ENCODE measurements at regions of chr6 and their contacts with region 1.

Region 1: DNA sequence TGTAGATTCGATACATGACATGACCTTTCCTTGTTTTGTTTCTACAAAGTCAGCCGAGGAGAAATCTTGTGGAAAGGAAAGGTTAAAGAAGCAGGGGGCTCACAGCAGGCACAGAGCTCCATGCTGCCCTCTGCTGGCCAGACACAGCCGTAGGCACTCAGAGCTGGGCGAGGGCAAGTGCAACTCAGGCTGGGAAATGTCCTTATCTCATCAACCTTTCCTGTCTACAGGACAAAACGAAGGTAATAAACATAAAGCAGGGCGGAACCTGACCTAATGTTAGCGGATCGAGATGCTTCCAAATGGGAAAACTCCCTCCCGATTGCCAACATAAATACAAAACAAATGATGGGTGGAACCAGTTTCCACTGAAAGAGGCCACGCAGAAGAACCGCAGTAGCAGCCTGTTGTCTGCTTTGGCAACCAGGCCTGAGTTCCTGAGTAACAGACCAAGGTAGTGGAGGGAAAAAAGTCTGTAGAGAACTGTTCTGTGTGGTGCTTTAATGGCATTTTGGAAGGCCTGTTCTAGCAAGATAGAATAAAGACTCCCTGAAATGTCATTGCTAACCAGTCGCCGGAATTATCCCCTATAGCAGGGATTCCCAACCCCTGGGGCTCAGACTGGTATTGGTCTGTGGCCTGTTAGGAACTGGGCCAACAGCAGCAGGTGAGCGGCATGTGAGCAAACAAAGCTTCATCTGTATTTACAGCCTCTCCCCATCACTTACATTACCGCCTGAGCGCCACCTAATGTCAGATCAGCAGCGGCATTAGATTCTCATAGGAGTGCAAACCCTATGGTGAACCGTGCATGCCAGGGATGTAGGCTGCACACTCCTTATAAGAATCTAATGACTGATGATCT is 85.2 kb downstream of the MBOAT1 start:
- DNase-seq: no peak
- H3K4me3 ChIP-seq: no peak overlapping the region
- H3K27me3 ChIP-seq: no peaks in the 10 kb centered on the region
- CTCF ChIP-seq: peak; percentile 96

Region 2: DNA sequence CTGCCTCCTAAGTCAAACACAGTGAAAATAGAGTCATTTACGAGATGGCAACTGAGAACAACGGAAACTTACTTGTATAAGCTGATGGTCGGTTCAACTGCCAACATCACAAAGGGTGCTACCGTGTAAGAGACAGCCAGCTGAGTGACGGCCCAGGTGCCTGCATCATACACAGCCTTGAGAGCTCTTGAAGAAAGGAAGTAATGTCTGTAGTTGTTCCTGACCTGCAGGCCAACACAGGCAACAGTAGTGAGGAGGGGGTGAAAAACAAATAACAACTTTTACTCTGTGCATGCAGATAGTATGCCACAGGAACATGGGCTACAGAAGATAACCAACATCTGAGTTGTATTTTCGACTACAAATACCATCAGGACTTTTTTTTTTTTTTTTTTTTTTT is 17.5 kb before region 1 on chr6:
- CTCF ChIA-PET with region 1: interaction called, 23 read pairs
- POLR2A ChIA-PET with region 1: no interaction called
- DNase-seq: no peak
- H3K4me3 ChIP-seq: no peak overlapping the region
- H3K27me3 ChIP-seq: no peaks in the 10 kb centered on the region
- CTCF ChIP-seq: no peak

Region 3: DNA sequence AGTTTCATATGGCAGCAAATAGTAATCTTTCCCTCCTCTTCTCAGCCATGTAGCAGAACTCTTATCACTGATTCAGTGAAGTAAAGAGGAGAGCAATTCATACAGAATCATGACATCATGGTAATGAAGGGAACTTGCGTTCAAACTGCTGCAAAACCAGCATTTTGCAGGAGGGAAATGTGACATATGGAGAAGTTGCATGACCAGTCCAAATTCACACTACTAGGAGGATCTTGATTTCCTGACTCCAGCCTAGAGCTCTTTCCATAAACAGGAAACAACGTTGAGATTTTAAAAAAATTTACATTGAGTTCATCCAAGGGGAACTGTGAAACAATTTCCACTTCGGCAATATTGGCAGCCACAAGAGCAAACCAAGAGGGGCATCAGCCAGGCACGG is 21.4 kb after region 1 on chr6:
- CTCF ChIA-PET with region 1: interaction called, 10 read pairs
- POLR2A ChIA-PET with region 1: no interaction called
- DNase-seq: no peak
- H3K4me3 ChIP-seq: no peak overlapping the region
- H3K27me3 ChIP-seq: no peaks in the 10 kb centered on the region
- CTCF ChIP-seq: no peak

Region 4: DNA sequence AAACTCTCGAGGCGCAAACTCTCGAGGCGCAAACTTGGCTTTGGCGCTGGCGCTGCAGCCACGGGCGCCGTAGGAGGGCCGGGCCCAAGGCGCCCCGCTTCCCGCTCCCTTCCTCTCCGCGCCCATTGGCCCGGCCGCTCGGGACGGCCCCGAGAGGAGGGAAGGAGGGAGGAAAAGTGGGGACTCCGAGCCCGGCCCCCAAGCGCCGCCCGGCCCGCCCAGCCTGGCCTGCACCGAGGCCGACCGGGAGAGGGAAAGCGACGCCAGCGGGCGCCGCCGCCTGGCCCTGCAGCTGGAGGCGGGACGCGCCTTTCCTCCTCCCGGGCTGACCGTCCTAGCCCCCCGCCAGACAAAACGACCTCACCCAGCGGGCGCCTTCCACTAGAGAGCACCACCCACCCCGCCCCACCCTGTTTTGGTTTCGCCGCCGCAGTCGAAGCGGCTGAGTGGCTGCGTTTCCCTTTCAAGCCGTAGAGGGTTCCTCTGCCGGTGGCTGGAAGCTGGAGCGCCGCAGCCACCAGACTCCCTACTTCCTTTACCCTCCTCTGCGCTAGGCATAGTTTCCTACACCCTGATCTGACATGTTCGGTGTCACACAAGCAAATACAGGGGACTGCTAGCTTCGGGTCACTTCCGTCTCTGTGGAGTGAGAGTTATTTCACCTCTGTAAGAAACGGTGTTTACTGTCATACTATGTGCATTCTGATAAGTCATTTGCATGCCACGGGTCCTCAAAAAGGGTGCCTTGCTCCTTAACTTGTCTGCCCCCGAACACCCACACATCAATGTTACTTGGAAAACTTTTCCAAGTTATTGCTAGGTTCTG is 85.6 kb after region 1 on chr6 and contains the start of gene MBOAT1:
- CTCF ChIA-PET with region 1: interaction called, 11 read pairs
- POLR2A ChIA-PET with region 1: no interaction called
- DNase-seq: peak; percentile 68
- H3K4me3 ChIP-seq: peak within 1 kb of the TSS; percentile 97
- H3K27me3 ChIP-seq: no peaks in the 10 kb centered on the region
- CTCF ChIP-seq: peak; percentile 34
- polyA plus RNA-seq, gene MBOAT1: 2.7 and 3.0 TPM in 2 replicates

Region 5: DNA sequence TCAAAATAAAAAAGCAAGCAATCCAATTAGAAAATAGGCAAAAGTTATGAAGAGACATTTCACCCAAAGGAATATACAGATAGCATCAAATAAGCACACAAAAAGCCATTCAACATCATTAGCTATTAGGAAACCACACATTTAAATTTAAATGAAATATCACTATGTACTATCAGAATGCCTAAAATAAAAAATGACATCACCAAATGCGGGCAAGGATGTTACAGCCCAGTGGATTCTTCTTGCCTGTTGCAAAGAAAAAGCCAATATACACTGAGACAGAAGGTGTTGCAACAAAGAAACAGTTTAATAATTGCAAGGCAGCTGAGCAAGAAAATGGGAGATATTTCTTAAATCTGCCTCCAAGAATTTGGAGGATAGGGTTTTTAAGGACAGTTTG is 116.3 kb after region 1 on chr6:
- CTCF ChIA-PET with region 1: no interaction called
- POLR2A ChIA-PET with region 1: no interaction called
- DNase-seq: no peak
- H3K4me3 ChIP-seq: no peak overlapping the region
- H3K27me3 ChIP-seq: no peaks in the 10 kb centered on the region
- CTCF ChIP-seq: no peak